ENCODE measurements at regions of chr12 and their contacts with region 1.

Region 1: GRCh38 chr12:57088459-57089248 is at the start of gene NAB2:
- DNase-seq: peak; percentile 97
- ATAC-seq: peak; percentile 67 to 77
- total RNA-seq, gene NAB2: 11.1 to 17.1 TPM

Region 2: GRCh38 chr12:56699020-56699661 is 389.5 kb before region 1 on chr12:
- intact Hi-C with region 1: no loop called
- DNase-seq: no peak
- ATAC-seq: no peak

Region 3: GRCh38 chr12:57111031-57111734 is 22.5 kb after region 1 on chr12 and contains the start of gene STAT6:
- intact Hi-C with region 1: loop called in 1 of 2 experiments (anchors 2 kb)
- DNase-seq: peak; percentile 90
- ATAC-seq: peak; percentile 81 to 85
- total RNA-seq, gene STAT6: 77.7 to 78.1 TPM